Motor neuron (in vitro differentiated cells): ENCODE measurements at regions of chr2 and their contacts with region 1.

Region 1: GRCh38 chr2:216698895-216699294 is 3.5 kb upstream of the IGFBP5 start:
- ATAC-seq: peak; percentile 30 to 53 (median 46)
- H3K4me3 ChIP-seq: no peak overlapping the region
- H3K27ac ChIP-seq: no peak overlapping the region
- H3K4me1 ChIP-seq: peaks cover 54 to 67% of the 10 kb centered on the region in 2 donors

Region 2: GRCh38 chr2:217166241-217166850 is 467.5 kb after region 1 on chr2:
- in situ Hi-C with region 1: loop called in 2 of 9 experiments (anchors 25 kb)
- ATAC-seq: peak in 4 of 8 experiments; percentile 40 to 86 (median 76)
- H3K4me3 ChIP-seq: no peak overlapping the region
- H3K27ac ChIP-seq: no peak overlapping the region
- H3K4me1 ChIP-seq: peaks cover 21 to 24% of the 10 kb centered on the region in 2 donors

Region 3: DNA sequence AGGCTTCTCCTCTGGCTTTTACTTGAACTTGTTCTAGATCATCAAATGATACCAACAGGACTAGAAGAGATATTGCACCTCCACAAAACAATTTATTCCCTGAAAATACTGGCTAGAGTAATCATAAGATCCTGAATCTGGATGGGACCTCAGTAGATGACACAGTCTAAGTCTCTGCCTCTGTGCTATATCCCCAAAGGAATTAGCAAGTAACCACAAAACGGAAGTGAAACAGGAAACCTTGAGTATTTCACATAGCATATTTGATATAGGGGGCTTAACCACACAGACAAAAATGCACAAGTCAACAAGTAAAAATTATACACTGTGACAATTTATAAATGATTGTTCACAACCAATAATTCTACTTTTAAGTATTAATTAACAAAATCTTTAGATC is 617.8 kb after region 1 on chr2:
- in situ Hi-C with region 1: loop called in 1 of 9 experiments (anchors 25 kb)
- ATAC-seq: peak in 1 of 8 experiments; percentile 46
- H3K4me3 ChIP-seq: no peak overlapping the region
- H3K27ac ChIP-seq: no peak overlapping the region
- H3K4me1 ChIP-seq: no peaks in the 10 kb centered on the region